ENCODE measurements at regions of chr1 and their contacts with region 1.

Region 1: DNA sequence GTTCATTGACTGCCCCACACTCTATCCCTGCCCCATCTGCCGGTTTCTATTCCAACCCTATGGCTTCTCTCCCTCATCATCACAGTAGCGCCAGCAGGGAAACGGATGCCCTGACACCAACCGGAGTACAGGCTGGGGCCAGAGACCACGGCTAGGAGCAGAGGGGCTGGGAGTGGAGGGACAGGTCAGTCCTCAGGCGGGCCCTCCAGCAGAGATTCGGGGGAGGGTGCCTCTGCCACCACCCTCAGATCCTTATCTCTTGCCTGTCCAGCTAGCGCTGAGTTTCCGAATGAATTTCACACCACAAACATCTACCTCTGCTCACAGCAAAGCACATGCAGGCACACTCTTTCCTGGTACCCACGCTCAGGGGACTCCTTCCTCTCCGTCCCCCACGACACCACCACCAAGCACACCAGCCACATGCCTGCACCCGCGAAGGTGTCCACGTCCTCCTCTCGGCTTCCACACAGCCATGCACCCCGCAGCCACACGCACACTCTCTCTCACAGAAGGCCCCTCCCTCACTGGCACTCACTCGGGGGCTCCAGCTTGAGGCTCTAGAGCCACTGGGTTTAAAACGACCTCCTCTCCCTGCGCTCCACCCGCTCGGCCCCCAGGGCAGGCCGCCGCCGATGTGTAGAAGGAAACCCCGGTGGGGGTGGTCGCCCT is 7.2 kb downstream of the TAL1 start:
- DNase-seq: no peak
- ATAC-seq: peak; percentile 21
- H3K4me3 ChIP-seq: peak overlapping the region in 2 of 3 experiments; percentile 33 to 68; a peak in 3 of 6 replicates
- H3K27ac ChIP-seq: no peak overlapping the region
- H3K4me1 ChIP-seq: peaks cover 24% of the 10 kb centered on the region
- H3K27me3 ChIP-seq: peaks cover 18 to 87% of the 10 kb centered on the region in 2 experiments
- CTCF ChIP-seq: no peak
- EP300 ChIP-seq: no peak
- POLR2A ChIP-seq: no peak
- RAD21 ChIP-seq: no peak

Region 2: GRCh38 chr1:47487850-47488450 is 263.1 kb after region 1 on chr1:
- CTCF ChIA-PET with region 1: no interaction called
- POLR2A ChIA-PET with region 1: no interaction called
- in situ Hi-C with region 1: no loop called
- intact Hi-C with region 1: loop called (anchors 5 kb)
- DNase-seq: no peak
- ATAC-seq: no peak
- H3K4me3 ChIP-seq: no peak overlapping the region
- H3K27ac ChIP-seq: no peak overlapping the region
- H3K4me1 ChIP-seq: no peaks in the 10 kb centered on the region
- H3K27me3 ChIP-seq: peaks cover 8 to 97% of the 10 kb centered on the region in 2 experiments; a peak in 4 of 5 replicates
- CTCF ChIP-seq: no peak
- EP300 ChIP-seq: no peak
- POLR2A ChIP-seq: no peak
- RAD21 ChIP-seq: no peak

Measured in HepG2 (cell line).